ENCODE measurements at regions of chr12 and their contacts with region 1.

Region 1: GRCh38 chr12:122860346-122861090 is 25.3 kb downstream of the HIP1R start:
- DNase-seq: peak; percentile 72 to 83
- ATAC-seq: peak; percentile 63 to 87
- H3K4me3 ChIP-seq: no peak overlapping the region
- H3K27ac ChIP-seq: 0 out of 6 replicates have a peak overlapping the region, but pooled peaks of 1 of the 2 experiments have one; percentile 20
- H3K4me1 ChIP-seq: no peaks in the 10 kb centered on the region
- CTCF ChIP-seq: peak; percentile 93
- EP300 ChIP-seq: no peak
- POLR2A ChIP-seq: no peak
- RAD21 ChIP-seq: peak; percentile 96 to 98

Region 2: GRCh38 chr12:122834104-122834920 is 26.2 kb before region 1 on chr12:
- CTCF ChIA-PET with region 1: interaction called, 13 read pairs
- POLR2A ChIA-PET with region 1: no interaction called
- DNase-seq: peak; percentile 79 to 82
- ATAC-seq: peak; percentile 74 to 84
- H3K4me3 ChIP-seq: peak overlapping the region; percentile 98
- H3K27ac ChIP-seq: peak overlapping the region; percentile 82 to 87
- H3K4me1 ChIP-seq: peaks cover 26% of the 10 kb centered on the region
- CTCF ChIP-seq: peak; percentile 23; the same call in 1 of the 3 replicates
- EP300 ChIP-seq: no peak
- POLR2A ChIP-seq: no peak
- RAD21 ChIP-seq: no peak

Region 3: DNA sequence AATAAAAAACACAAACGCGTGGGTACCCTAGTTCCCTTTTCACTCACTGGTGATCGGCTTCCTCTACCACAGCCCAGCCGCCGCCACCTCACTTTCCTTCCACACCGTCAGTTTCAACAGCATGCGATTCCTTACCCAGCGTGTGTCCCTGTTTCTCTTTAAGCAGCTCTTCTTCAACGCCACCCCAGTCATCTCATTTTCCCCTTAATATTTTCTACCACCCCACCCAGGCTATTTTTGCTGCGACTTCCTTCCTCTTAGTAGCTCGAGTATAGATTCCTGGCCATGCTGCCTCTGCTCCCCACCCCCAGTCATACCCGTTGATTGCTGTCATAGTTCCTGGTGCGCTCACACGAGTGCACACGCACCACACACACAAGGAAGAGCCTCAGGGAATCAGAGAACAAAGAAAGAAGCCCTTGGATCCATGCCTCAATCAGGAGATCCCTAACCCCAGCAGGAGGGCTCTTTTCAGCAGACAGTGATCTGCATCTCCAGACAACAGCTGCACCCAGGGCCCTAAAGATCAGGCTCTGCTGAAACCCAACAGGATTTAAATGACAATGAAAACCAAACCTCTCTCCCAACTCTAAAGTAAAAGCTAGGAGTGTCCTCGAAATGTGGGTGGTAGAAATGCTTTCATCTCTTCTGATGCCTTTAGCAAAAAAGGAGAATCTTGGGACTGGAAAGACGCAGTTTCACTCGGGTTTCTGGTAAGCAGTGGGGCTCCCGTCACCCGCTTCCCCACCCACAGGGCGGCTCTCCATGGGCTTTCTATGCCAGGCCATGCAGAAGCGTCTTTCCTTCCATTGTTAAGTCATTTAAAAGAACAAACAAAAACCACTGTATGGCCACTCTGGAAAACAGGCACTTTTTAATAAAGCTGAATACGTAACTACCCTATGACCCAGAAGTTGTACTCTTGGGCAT is 11.6 kb after region 1 on chr12:
- CTCF ChIA-PET with region 1: interaction called, 111 read pairs
- POLR2A ChIA-PET with region 1: no interaction called
- DNase-seq: peak in 1 of 2 experiments; percentile 44
- ATAC-seq: no peak; a peak in 1 of 6 replicates
- H3K4me3 ChIP-seq: no peak overlapping the region
- H3K27ac ChIP-seq: peak overlapping the region in 1 of 2 experiments; percentile 33; a peak in 1 of 6 replicates
- H3K4me1 ChIP-seq: peaks cover 10% of the 10 kb centered on the region; the same call in 1 of the 3 replicates
- CTCF ChIP-seq: no peak
- EP300 ChIP-seq: no peak
- POLR2A ChIP-seq: no peak
- RAD21 ChIP-seq: no peak

Region 4: DNA sequence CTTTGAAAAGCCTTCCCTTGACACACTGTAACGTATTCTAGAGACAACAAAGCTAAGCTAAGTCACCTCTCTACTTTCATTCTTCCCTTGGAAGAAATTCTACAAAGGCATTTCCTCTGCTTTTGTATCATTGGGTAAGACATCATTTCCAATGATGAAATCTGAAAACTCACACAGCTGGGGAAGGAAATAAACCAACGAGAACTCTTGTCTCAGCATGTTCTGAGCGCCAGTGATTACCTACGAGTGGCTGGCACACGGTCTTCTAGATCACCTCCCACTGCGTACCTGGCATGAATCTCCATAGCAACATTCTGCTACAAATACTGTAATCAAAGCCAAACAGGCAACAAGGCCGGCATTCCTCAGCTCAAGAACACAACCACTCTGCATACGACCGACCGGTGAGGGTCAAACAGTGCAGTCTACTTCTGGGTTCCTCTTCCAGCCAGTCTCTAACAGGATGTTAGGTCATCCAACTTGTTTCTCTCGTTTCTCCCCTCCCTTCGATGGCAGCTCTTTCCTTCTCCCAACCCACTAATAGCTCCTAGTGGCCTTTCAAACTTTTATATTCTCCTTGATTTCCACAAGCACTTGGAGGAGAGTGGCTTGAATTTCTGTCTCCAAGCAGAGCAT is 27.8 kb after region 1 on chr12:
- CTCF ChIA-PET with region 1: interaction called, 111 read pairs
- POLR2A ChIA-PET with region 1: no interaction called
- DNase-seq: peak; percentile 74 to 84
- ATAC-seq: peak; percentile 72 to 84
- H3K4me3 ChIP-seq: 0 out of 3 replicates have a peak overlapping the region, but pooled peaks have one; percentile 12
- H3K27ac ChIP-seq: peak overlapping the region; percentile 42 to 84
- H3K4me1 ChIP-seq: peaks cover 79% of the 10 kb centered on the region
- CTCF ChIP-seq: no peak
- EP300 ChIP-seq: no peak
- POLR2A ChIP-seq: no peak
- RAD21 ChIP-seq: no peak

Region 5: GRCh38 chr12:122909442-122910288 is 49.1 kb after region 1 on chr12:
- CTCF ChIA-PET with region 1: interaction called, 11 read pairs
- POLR2A ChIA-PET with region 1: no interaction called
- DNase-seq: no peak
- ATAC-seq: peak; percentile 13 to 44; a peak in 2 of 6 replicates
- H3K4me3 ChIP-seq: no peak overlapping the region
- H3K27ac ChIP-seq: no peak overlapping the region
- H3K4me1 ChIP-seq: peaks cover 5% of the 10 kb centered on the region; the same call in 1 of the 3 replicates
- CTCF ChIP-seq: no peak
- EP300 ChIP-seq: no peak
- POLR2A ChIP-seq: no peak
- RAD21 ChIP-seq: no peak

Region 6: DNA sequence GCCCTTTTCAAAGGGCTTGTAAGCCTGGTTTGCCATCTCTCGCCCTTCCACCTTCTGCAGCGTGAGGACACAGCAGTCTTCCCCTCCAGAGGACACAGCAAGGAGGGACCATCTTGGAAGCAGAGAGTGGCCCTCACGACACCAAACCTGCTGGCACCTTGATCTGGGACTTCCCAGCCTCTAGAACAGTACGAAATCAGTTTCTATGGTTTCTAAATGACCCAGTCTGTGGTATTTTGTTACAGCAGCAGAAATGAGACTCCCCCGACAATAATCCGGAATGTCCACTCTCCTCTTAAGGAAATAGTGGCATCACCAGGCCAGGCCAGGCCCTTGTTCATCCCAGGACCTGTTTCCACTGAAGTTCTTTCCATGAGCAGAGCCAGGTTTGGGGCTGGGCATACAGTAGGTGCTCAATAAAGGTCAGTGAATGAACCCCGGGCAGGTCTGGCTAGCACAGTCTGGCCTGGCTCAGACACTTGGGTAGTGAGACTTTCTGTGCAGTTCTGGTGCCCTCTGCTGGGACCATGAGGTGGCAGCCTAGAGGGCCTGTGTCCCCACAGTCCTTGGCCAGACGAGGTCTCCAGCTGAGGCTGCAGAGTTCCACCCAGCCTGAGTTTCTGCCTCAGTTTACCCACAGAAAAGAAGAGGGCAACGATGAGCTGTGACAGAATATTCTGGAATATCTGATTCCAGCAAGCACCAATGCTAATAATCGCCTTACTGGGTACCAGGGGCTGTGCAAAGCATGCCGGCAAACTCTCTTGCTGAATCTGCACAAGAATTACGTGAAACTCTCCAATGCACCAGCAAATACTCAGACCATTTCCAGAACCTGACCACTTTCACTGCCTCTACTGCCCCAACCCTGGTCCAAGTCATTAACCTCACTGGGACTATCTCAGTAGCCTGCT is 91.7 kb after region 1 on chr12:
- CTCF ChIA-PET with region 1: interaction called, 522 read pairs
- POLR2A ChIA-PET with region 1: no interaction called
- DNase-seq: peak; percentile 79 to 87
- ATAC-seq: peak; percentile 95 to 98
- H3K4me3 ChIP-seq: no peak overlapping the region
- H3K27ac ChIP-seq: peak overlapping the region; percentile 57 to 72; a peak in 5 of 6 replicates
- H3K4me1 ChIP-seq: peaks cover 25% of the 10 kb centered on the region
- CTCF ChIP-seq: peak; percentile 93
- EP300 ChIP-seq: no peak
- POLR2A ChIP-seq: no peak
- RAD21 ChIP-seq: peak; percentile 97 to 99